HEK293T (cell line): ENCODE measurements at regions of chr2 and their contacts with region 1.

Region 1: DNA sequence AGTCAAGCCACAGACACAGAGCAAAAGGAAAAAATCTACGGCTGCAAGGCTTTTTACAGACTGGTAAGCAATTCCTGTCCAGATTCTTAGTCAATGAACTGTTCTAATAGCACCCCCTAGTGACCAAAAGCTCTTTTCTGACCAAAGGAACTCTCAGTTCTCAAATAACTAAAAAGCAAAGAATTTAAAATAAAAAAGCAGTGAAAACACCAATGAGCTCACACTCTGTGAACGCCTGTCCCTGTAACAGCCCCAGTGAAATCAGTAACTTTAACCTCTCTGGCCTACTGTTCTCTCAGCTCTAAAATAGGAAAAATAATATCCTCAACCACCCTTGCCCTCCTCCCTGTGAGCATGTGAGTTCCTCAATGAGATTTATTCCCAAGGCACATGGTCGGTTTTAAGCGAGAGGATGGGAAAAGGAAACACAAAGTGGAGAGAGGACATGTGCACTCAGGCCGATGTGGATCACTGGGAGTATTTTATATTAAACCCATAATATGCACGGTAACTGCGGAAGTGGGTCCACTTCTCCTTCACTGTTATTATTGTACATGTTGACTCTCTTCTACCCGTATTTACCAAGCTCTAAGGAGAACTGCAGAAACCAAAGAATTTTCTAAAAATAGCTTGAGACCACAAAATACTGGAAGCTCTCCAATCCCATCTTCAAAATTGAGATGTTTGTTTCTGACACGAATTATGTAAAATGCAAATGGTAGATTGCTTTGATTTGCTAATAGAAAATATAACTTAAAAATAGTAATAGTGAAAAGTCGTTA is 128.5 kb downstream of the STK39 start:
- DNase-seq: peak; percentile 35

Region 2: DNA sequence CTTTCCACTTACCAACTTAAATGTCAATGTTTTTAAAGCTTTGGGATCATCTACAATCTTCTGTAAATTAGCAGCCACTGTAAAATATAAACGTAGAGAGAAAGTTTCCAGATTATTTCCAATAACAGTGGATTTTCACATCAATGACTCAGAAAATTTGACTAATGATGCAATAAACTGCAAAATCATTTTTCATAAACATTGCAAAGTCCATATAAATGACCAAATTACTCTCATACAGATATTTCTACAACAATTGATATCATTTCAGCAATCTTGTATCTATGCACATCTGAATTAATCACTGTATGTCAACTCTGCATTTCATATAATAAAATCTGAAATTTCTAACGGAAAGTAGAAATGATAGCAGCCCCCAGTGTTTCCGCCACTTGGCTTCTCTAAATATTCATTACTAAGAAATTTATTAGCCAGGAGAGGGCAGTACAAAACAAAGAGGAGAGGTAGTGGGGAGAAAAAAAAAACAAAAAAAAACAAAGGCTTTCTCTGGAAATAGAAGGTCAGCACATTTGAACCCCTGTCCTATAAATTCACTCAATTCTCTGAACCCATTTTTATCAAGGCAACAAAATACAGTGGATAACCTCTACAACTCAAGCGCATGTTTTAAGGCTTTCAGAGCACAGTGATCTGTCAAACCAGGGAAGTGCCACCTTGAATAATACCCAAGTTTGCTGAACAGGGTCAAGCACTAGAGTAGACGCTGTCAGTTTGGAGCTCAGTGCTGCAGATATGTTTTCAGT is 154.1 kb before region 1 on chr2:
- CTCF ChIA-PET with region 1: interaction called, 10 read pairs
- POLR2A ChIA-PET with region 1: no interaction called
- DNase-seq: no peak

Region 3: DNA sequence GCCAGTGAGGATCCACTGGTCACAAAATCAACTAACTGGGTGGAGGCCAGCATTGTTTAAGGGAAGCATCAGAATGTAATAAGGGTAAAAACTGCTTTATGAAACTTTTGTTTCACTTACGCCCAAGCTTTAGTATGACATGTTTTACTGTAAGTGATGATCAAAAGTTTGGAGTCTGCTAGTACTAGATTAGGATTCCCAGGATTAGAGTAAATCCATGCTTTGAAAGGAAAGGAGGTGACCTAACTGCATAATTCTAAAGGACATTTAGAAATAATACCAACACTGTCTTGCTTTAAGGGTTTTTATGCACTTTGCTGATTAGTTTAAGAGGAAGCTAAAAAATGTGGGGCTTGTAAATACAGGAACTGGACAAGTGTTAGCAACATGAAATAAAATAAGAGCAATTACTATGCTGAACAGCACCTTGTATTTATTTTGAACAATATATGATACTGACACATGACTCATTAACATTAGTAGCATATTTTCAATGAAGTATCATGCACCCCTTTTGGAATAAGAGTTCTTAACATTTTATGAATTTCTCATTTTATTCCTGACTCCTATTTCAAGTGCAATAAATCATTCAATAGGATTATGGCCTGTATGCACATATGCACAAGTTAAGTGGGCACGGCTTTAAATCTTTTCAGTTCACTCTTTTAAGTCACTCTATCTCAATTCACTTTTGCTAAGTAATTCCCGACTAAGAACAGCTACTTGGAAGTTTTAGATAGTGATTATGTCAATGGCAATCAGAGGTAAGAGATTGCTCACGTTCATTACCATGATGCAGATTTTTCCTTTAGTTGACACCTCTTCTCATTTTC is 66.0 kb after region 1 on chr2:
- CTCF ChIA-PET with region 1: no interaction called
- POLR2A ChIA-PET with region 1: no interaction called
- DNase-seq: no peak